PC-3 (cell line): ENCODE measurements at regions of chr2 and their contacts with region 1.

Region 1: DNA sequence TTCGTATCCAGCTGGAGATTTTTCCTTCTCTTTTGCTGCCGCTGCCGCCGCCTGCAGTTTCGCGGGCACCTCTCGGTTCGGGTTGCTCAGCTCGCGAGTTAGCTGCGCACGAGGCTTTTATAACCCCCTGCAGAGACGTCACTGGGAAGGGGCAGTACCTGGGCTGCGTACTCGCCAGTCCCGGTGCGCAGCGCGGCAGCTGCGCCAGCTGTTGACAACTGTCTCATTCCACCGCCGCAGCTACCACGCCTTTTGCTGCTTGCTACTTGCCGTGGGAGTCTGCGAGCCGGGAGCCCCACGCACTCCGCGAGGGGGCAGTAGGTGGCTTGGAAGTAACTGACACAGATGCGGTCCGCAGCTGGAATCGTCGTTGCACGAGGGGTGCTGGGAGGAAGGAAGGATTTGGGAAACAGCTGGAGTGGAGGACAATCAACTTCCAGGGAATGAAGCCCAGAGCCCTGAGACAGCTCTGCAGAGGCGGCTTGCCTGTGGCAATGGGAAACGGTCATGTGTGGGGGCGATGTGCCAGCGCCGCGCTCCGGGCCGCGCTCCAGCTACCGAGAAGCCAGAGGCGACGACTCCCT is at the start of gene TACR1:
- DNase-seq: peak; percentile 53
- ATAC-seq: peak; percentile 81
- H3K4me3 ChIP-seq: peak within 1 kb of the TSS; percentile 56
- H3K27ac ChIP-seq: no peak within 1 kb of the TSS
- H3K4me1 ChIP-seq: peaks cover 13% of the 10 kb centered on the region
- H3K27me3 ChIP-seq: peaks cover 84% of the 10 kb centered on the region
- CTCF ChIP-seq: peak; percentile 74
- total RNA-seq, gene TACR1: not detected in 2 replicates

Region 2: DNA sequence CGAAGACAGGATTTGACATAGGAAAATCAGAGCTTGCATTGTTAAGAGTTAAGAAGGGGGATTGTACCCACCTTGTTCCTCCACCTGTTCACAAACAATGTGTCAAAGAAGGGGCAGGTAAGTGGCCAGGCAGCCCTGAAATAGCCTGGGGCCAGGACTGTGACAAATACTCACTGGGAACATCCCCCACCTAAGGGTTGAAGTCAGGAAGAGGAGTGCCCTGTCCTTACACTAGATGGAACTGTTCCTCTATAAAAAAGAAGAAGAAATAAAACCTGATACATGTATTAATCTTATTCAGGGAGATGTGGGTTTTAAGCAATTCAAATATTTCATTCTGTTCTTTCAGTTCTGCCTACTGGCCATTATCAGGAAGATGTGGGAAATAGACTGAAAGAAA is 42.1 kb before region 1 on chr2:
- CTCF ChIA-PET with region 1: no interaction called
- POLR2A ChIA-PET with region 1: no interaction called
- intact Hi-C with region 1: loop called (anchors 5 kb)
- DNase-seq: peak; percentile 60
- ATAC-seq: peak; percentile 67
- H3K4me3 ChIP-seq: no peak overlapping the region
- H3K27ac ChIP-seq: no peak overlapping the region
- H3K4me1 ChIP-seq: peaks cover 17% of the 10 kb centered on the region
- H3K27me3 ChIP-seq: peaks cover 2% of the 10 kb centered on the region; the same call in 1 of the 2 replicates
- CTCF ChIP-seq: peak; percentile 68

Region 3: DNA sequence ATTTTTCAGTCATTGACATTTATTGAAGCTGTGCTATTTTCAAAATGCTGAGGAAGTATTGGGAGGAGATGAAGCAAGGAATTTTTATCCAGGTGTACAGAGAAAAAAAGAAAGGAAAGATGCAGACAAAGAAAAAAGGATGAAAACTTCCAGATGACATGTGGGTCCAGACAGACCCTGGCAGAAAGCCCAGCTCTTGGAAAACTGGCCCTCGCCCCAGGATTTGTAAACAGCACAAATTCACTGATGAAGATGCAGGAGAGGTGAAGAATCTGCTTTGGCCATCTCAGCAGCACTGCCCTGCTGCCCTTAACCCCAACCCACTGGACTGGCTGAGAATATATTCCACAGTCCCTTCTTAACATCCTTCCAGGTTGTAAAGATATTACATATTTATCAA is 12.7 kb before region 1 on chr2:
- CTCF ChIA-PET with region 1: no interaction called
- POLR2A ChIA-PET with region 1: no interaction called
- intact Hi-C with region 1: no loop called
- DNase-seq: no peak
- ATAC-seq: no peak
- H3K4me3 ChIP-seq: no peak overlapping the region
- H3K27ac ChIP-seq: no peak overlapping the region
- H3K4me1 ChIP-seq: peaks cover 13% of the 10 kb centered on the region
- H3K27me3 ChIP-seq: peaks cover 32% of the 10 kb centered on the region
- CTCF ChIP-seq: no peak